ENCODE measurements at regions of chr10 and their contacts with region 1.

Region 1: DNA sequence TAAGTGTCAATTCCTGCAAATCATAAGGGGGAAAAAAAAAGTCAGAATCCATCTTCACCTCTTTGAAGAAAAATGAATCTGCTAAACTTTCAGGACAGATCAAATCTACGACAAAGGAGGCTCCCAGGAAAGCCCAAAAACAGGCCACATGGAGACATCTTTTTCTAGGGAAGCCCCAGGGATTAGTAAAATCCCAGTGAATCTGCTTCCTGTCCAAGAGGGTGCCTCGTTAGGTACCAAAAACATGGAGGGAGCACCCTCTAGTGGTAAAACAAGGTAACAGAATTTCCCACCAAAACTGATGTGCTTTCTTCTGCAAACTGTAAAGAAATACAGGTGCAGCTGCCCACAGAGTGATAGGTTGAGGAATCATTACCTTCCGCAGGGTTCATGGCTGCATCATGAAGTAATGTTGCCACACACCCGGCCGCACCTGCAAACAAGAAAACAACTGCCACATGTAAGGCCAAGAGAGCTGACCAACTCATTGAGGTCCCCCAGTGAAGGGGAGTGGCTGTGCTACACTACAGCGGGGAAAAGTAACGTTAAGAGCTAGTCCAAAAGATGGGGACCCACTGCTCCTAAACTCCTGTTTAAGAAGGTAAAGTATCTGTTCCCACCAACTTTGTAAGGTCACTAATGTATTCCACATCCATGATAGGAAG is 7.9 kb downstream of the SLC25A28 start:
- DNase-seq: peak; percentile 78
- ATAC-seq: peak; percentile 67
- H3K4me3 ChIP-seq: no peak overlapping the region
- H3K27ac ChIP-seq: no peak overlapping the region
- H3K4me1 ChIP-seq: peaks cover 5% of the 10 kb centered on the region; the same call in 1 of the 2 replicates
- H3K27me3 ChIP-seq: no peaks in the 10 kb centered on the region
- CTCF ChIP-seq: peak; percentile 78

Region 2: DNA sequence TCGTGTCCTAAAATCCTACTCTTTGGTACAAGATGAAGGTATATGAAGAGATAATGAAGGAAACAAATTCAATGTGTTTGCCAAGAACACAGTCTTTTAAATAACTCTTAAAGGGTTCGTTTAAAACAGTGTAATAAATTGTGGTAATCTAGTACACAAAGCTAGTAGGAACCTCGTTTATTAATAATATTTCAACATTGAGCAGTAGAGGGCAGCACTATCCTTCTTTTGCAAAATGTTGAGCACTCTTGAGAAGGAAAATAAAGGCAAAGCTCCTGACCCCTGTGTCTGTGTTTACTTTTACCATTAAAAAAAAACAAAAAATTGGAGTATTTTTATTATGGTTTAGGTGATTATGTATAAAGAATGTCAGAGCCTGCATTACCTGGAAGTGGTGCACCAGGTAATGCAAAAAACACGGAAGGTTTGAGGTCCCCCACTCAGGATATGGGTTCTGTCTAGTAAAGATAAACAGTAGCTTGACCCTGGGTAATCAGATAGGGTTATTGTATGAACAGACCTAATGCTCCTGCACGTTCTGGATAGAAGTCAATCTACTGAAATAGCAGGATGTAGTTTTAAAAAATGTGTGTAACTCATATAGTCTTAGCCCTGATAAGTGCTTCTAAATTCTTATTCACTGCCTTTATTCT is 176.2 kb before region 1 on chr10:
- CTCF ChIA-PET with region 1: interaction called, 3 read pairs
- POLR2A ChIA-PET with region 1: no interaction called
- intact Hi-C with region 1: loop called (anchors 1 kb)
- DNase-seq: peak; percentile 72
- ATAC-seq: peak; percentile 46; the same call in 1 of the 2 replicates
- H3K4me3 ChIP-seq: no peak overlapping the region
- H3K27ac ChIP-seq: no peak overlapping the region
- H3K4me1 ChIP-seq: no peaks in the 10 kb centered on the region
- H3K27me3 ChIP-seq: no peaks in the 10 kb centered on the region
- CTCF ChIP-seq: peak; percentile 65

Region 3: GRCh38 chr10:99484603-99485581 is 127.4 kb before region 1 on chr10:
- CTCF ChIA-PET with region 1: no interaction called
- POLR2A ChIA-PET with region 1: no interaction called
- intact Hi-C with region 1: loop called (anchors 2 kb)
- DNase-seq: peak; percentile 53
- ATAC-seq: peak; percentile 81
- H3K4me3 ChIP-seq: no peak overlapping the region
- H3K27ac ChIP-seq: no peak overlapping the region
- H3K4me1 ChIP-seq: no peaks in the 10 kb centered on the region
- H3K27me3 ChIP-seq: peaks cover 33% of the 10 kb centered on the region
- CTCF ChIP-seq: peak; percentile 60

Region 4: DNA sequence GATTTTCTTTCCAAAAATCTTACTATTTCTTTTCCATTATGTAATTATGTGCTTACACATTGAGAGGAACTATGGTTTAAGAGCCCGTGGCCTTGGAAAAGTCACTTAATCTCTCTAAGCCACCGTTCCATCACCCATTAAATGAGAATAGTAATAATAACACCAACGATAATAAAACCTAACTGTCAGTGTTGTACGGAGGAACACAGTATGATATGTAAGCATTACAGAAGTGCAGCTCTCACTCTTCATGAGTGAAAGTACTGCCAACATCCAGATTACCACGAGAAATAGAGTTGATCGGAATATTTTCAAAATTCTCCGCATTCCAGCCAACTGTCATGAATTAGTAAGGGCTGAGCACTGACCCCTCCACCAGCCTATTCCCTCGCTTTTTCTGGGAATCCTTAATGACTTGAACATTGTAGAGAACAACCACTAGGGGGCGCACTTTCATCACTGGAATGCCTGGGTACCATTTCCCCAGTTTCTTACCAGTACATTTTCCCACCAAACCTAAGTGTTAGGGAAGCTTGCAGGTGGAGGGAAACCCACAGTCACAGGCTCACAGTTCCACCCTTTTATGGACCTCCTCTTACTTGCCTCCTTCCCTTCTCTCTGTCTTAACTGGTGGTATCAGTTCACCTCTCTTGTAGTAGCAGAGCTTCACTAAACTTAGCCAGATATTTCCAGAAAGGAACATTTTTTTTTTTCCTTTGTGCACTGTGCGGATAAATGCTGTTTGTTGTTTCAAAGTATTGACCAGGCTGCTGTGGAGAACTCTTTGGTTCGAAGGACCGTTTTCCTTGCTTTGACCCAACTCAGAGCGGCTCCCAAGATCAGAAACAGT is 51.8 kb before region 1 on chr10:
- CTCF ChIA-PET with region 1: no interaction called
- POLR2A ChIA-PET with region 1: no interaction called
- intact Hi-C with region 1: loop called (anchors 2 kb)
- DNase-seq: peak; percentile 60
- ATAC-seq: peak; percentile 53; the same call in 1 of the 2 replicates
- H3K4me3 ChIP-seq: peak overlapping the region; percentile 49; the same call in 1 of the 2 replicates
- H3K27ac ChIP-seq: no peak overlapping the region
- H3K4me1 ChIP-seq: peaks cover 5% of the 10 kb centered on the region; the same call in 1 of the 2 replicates
- H3K27me3 ChIP-seq: no peaks in the 10 kb centered on the region
- CTCF ChIP-seq: peak; percentile 83

Region 5: DNA sequence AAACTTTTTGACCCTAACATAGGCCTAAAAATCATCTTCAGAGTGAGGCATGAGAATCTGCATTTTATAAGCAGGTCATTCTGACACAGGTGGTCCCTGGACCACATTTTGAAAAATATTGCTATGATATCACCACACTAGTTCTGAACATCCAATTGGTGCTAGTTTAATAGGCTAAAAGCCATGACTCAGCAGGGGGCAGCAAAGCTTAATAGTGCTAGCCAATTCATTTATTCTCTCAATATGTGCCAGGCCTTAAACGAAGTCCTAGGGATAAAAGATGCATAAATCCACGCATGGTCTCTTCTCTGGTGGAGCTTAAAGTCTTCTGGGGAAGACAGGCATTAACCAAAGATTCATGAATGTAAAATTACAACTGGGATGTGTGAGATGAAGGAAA is 18.1 kb after region 1 on chr10:
- CTCF ChIA-PET with region 1: no interaction called
- POLR2A ChIA-PET with region 1: no interaction called
- intact Hi-C with region 1: no loop called
- DNase-seq: peak; percentile 53
- ATAC-seq: peak; percentile 77
- H3K4me3 ChIP-seq: no peak overlapping the region
- H3K27ac ChIP-seq: no peak overlapping the region
- H3K4me1 ChIP-seq: no peaks in the 10 kb centered on the region
- H3K27me3 ChIP-seq: no peaks in the 10 kb centered on the region
- CTCF ChIP-seq: peak; percentile 64

Measured in PC-3 (cell line).